ENCODE measurements at regions of chr2 and their contacts with region 1.

Region 1: GRCh38 chr2:164890544-164890943 is 48.9 kb upstream of the COBLL1 start:
- DNase-seq: no peak
- ATAC-seq: no peak
- H3K4me3 ChIP-seq: no peak overlapping the region
- H3K4me3 Mint-ChIP-seq: no peak overlapping the region
- H3K27ac ChIP-seq: no peak overlapping the region
- H3K27ac Mint-ChIP-seq: no peak overlapping the region
- H3K4me1 ChIP-seq: no peaks in the 10 kb centered on the region
- H3K4me1 Mint-ChIP-seq: peaks cover 3% of the 10 kb centered on the region
- H3K27me3 ChIP-seq: no peaks in the 10 kb centered on the region
- H3K27me3 Mint-ChIP-seq: no peaks in the 10 kb centered on the region
- CTCF ChIP-seq: no peak

Region 2: DNA sequence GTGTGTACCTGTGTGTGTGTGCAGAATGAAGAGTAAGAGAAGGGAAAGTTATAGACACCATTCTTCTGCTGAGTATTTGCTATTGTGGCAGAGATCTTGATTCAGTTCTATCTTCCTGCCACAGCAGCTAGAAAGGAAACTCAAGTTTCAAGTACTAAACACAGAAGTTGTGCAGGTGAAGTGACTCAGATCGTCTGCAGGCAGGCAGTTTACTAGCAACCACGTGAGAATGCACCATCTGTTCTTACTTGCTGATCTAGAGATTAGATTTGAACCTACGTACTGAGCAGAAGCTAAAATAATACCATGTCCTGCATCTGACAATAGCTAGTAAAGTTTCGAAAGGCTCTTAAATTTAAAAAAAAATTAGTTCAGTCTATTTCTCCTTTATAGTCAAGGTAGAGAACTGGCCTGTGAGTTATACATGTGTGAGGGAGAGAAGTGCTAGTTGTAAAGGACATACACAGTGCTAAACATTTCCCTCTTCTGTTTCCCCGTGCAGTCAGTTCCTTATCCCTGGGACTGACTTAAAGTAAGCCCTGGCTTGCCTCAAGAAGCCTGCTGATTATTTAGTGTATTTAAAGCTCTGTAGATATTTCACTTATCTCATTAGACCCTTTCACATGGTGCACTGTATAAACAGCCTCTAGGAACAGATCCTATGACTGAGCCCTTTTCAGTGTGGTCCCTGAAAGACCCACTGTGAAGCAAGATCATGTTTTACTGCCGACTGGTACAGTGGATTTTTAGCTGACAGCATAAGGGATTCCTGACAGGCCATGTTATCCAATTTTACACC is 19.8 kb after region 1 on chr2:
- CTCF ChIA-PET with region 1: interaction called, 10 read pairs
- POLR2A ChIA-PET with region 1: no interaction called
- intact Hi-C with region 1: no loop called
- DNase-seq: peak; percentile 50
- ATAC-seq: peak; percentile 79
- H3K4me3 ChIP-seq: peak overlapping the region in 1 of 5 experiments; percentile 13
- H3K4me3 Mint-ChIP-seq: peak overlapping the region; percentile 42
- H3K27ac ChIP-seq: peak overlapping the region; percentile 4 to 55
- H3K27ac Mint-ChIP-seq: peak overlapping the region; percentile 73
- H3K4me1 ChIP-seq: peaks cover 23 to 29% of the 10 kb centered on the region in 2 donors
- H3K4me1 Mint-ChIP-seq: peaks cover 36% of the 10 kb centered on the region
- H3K27me3 ChIP-seq: no peaks in the 10 kb centered on the region
- H3K27me3 Mint-ChIP-seq: no peaks in the 10 kb centered on the region
- CTCF ChIP-seq: no peak

Measured in B cell (primary cell).